Naive thymus-derived CD4-positive, alpha-beta T cell (primary cell): ENCODE measurements at regions of chrX and their contacts with region 1.

Region 1: DNA sequence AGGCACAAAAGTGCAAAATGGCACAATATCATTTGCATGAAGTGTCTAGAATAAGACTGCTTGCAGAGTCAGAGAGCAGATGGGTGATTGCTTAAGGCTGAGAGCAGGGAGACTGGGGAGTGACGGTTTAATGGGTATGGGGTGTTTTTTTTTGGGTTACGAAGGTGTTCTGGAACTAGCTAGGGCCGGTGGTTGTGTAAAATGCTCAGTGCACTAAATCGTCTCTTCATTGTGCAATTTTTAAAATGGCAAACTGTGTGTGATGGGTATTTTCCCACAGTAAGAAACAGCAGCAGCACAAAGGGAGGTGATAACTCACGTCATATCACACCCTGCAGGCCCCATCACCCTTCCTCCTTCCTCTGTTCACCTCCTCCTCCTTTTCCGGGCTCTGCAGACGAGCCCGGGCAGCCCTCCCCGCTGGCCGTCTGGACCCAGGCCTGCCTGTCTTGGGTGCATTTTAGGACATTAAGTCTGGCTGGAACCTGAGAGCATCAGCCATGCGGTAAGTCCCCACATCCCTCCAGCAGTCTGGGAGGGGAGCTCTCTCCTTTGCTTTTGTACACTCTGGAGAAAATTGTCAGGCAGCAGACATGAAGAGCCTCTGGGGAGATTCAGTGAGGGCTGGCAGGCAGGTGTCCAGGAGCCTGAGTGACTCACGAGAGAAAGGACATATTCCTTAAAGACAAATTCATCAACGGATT is 42.7 kb downstream of the ASMT start:
- DNase-seq: peak in 8 of 9 donors; percentile 18 to 73 (median 60)
- ATAC-seq: peak; percentile 69
- H3K4me3 ChIP-seq: peak overlapping the region; percentile 69
- H3K4me3 Mint-ChIP-seq: peak overlapping the region; percentile 77 to 99 (median 92)
- H3K27ac ChIP-seq: peak overlapping the region; percentile 80
- H3K27ac Mint-ChIP-seq: peak overlapping the region; percentile 90 to 99 (median 94)
- H3K4me1 ChIP-seq: peaks cover 21 to 24% of the 10 kb centered on the region in 2 donors
- H3K4me1 Mint-ChIP-seq: peaks cover 17 to 40% (median 36%) of the 10 kb centered on the region in 7 donors
- H3K27me3 ChIP-seq: no peaks in the 10 kb centered on the region
- H3K27me3 Mint-ChIP-seq: no peaks in the 10 kb centered on the region

Region 2: GRCh38 chrX:318739-319578 is 1338.6 kb before region 1 on chrX and contains the start of gene GTPBP6:
- CTCF ChIA-PET with region 1: no interaction called
- POLR2A ChIA-PET with region 1: no interaction called
- intact Hi-C with region 1: loop called in 1 of 2 experiments (anchors 1 kb)
- DNase-seq: peak; percentile 93 to 100 (median 99)
- ATAC-seq: peak; percentile 80
- H3K4me3 ChIP-seq: peak within 1 kb of the TSS; percentile 70
- H3K4me3 Mint-ChIP-seq: peak within 1 kb of the TSS in 9 of 10 donors; percentile 85 to 98 (median 92)
- H3K27ac ChIP-seq: peak within 1 kb of the TSS; percentile 95
- H3K27ac Mint-ChIP-seq: peak within 1 kb of the TSS; percentile 93 to 100 (median 98)
- H3K4me1 ChIP-seq: peaks cover 15 to 16% of the 10 kb centered on the region in 2 donors
- H3K4me1 Mint-ChIP-seq: peaks cover 8 to 34% (median 25%) of the 10 kb centered on the region in 7 donors
- H3K27me3 ChIP-seq: no peaks in the 10 kb centered on the region
- H3K27me3 Mint-ChIP-seq: peaks cover 0 to 3% (median 0%) of the 10 kb centered on the region in 5 donors
- total RNA-seq, gene GTPBP6: 52.1 to 95.2 (median 75.1) TPM

Region 3: GRCh38 chrX:1391707-1392375 is 265.7 kb before region 1 on chrX and contains the start of gene SLC25A6:
- CTCF ChIA-PET with region 1: no interaction called
- POLR2A ChIA-PET with region 1: no interaction called
- intact Hi-C with region 1: loop called (anchors 1 to 5 kb)
- DNase-seq: peak; percentile 97 to 100 (median 100)
- ATAC-seq: peak; percentile 96
- H3K4me3 ChIP-seq: peak within 1 kb of the TSS; percentile 94
- H3K4me3 Mint-ChIP-seq: peak within 1 kb of the TSS; percentile 78 to 95 (median 92)
- H3K27ac ChIP-seq: peak within 1 kb of the TSS; percentile 97
- H3K27ac Mint-ChIP-seq: peak within 1 kb of the TSS; percentile 84 to 98 (median 91)
- H3K4me1 ChIP-seq: peaks cover 25 to 33% of the 10 kb centered on the region in 2 donors
- H3K4me1 Mint-ChIP-seq: peaks cover 35 to 71% (median 52%) of the 10 kb centered on the region in 7 donors
- H3K27me3 ChIP-seq: no peaks in the 10 kb centered on the region
- H3K27me3 Mint-ChIP-seq: no peaks in the 10 kb centered on the region
- total RNA-seq, gene SLC25A6: 238 to 341 (median 270) TPM

Region 4: GRCh38 chrX:1618689-1619088 is 38.8 kb before region 1 on chrX:
- CTCF ChIA-PET with region 1: no interaction called
- POLR2A ChIA-PET with region 1: no interaction called
- intact Hi-C with region 1: loop called in 1 of 2 experiments (anchors 2 kb)
- DNase-seq: no peak
- ATAC-seq: no peak
- H3K4me3 ChIP-seq: no peak overlapping the region
- H3K4me3 Mint-ChIP-seq: no peak overlapping the region
- H3K27ac ChIP-seq: no peak overlapping the region
- H3K27ac Mint-ChIP-seq: peak overlapping the region in 2 of 9 donors; percentile 72 to 78
- H3K4me1 ChIP-seq: peaks cover 0 to 11% of the 10 kb centered on the region in 2 donors
- H3K4me1 Mint-ChIP-seq: peaks cover 4 to 16% (median 9%) of the 10 kb centered on the region in 7 donors
- H3K27me3 ChIP-seq: no peaks in the 10 kb centered on the region
- H3K27me3 Mint-ChIP-seq: no peaks in the 10 kb centered on the region

Region 5: DNA sequence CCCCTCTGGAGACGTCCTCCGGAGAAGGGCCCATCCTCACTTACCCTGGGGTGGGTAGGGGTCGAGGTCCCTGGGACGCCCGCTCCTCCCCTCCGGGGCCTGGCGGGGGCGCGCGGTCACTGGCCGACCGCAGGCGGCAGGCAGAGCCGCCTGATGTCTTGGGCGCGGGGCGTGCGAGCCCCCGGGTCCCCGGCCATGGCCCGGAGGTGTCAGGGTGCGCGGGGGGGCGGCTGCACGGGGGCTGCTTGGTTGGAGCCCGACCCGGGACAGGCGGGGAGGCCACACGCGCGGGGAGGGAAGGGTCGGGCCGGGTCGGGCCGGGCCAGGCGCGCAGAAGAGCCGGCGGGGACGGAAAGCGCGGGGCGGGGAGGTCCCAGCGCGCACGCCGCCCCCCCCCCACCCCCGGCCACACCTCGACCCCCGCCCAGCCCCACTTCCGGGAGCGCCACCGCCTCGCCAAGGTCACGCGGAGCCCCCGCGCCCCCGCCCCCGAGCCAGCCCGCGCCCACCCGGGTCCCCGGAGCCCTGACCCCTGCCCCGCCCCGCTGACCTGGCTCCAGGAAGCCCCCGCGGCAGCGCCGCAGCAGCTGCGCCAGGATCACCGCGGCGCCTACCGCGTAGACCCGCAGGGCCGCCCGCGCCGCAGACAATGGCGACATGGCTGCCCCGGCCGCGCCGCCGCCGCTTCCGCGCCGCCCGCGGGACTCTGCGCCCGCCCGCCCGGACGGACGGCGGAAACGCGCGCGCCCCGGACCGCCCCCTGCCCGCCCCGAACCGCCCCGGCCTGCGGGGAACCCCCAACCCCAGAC is 843.0 kb after region 1 on chrX and contains the starts of genes DHRSX and ZBED1:
- CTCF ChIA-PET with region 1: no interaction called
- POLR2A ChIA-PET with region 1: no interaction called
- intact Hi-C with region 1: loop called (anchors 2 to 5 kb)
- DNase-seq: peak; percentile 16 to 71 (median 40)
- ATAC-seq: peak; percentile 78
- H3K4me3 ChIP-seq: peak within 1 kb of the TSS; percentile 65
- H3K4me3 Mint-ChIP-seq: peak within 1 kb of the TSS; percentile 75 to 90 (median 89)
- H3K27ac ChIP-seq: peak within 1 kb of the TSS; percentile 77
- H3K27ac Mint-ChIP-seq: peak within 1 kb of the TSS; percentile 81 to 94 (median 88)
- H3K4me1 ChIP-seq: peaks cover 0 to 10% of the 10 kb centered on the region in 2 donors
- H3K4me1 Mint-ChIP-seq: peaks cover 15 to 39% (median 29%) of the 10 kb centered on the region in 7 donors
- H3K27me3 ChIP-seq: no peaks in the 10 kb centered on the region
- H3K27me3 Mint-ChIP-seq: no peaks in the 10 kb centered on the region
- total RNA-seq, gene DHRSX: 15.6 to 26.2 (median 20.4) TPM
- total RNA-seq, gene ZBED1: 23.7 to 37.0 (median 27.4) TPM

Region 6: DNA sequence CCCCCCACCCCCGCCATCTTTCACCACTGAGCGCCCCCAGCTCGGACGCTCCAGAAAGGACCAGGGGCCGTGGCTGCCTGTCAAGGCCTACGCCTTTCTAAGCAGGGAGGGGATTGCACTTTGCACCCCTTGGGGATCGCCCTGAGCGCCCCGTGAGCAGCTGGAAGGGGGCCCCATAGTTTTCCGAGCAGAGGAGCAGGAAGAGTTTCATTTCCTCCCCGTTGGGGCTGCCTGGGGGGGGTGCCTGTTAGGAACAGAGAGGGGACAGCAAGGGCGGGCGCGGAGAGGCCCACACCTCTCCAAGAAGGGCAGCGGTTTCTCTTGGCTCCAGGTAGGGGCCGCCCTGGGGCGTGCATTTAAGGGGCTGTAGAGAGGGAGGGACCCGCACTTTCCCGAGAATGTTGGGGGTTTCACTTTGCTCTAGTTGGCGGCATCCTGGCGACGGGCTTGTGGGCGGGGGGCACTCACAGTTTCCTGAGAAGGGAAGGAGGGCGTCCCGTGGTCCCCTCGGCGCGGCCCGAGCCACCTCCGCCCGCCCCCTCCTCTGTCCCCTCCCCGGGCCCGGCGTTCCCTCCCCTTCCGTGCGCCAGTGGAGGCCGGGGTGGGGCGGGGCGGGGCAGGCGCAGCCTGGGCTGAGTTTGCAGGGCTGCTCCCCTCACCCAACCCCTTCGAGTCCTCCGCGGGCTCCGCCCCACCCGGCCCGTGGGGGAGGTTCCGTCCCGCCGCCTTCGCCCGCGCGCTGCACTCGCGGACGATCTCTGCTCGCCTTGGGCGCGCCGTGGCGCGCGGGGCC is 951.3 kb after region 1 on chrX:
- CTCF ChIA-PET with region 1: no interaction called
- POLR2A ChIA-PET with region 1: no interaction called
- intact Hi-C with region 1: loop called (anchors 1 kb)
- DNase-seq: peak; percentile 69 to 89 (median 79)
- ATAC-seq: peak; percentile 99
- H3K4me3 ChIP-seq: peak overlapping the region; percentile 89
- H3K4me3 Mint-ChIP-seq: peak overlapping the region; percentile 90 to 96 (median 93)
- H3K27ac ChIP-seq: peak overlapping the region; percentile 71
- H3K27ac Mint-ChIP-seq: peak overlapping the region; percentile 51 to 93 (median 86)
- H3K4me1 ChIP-seq: peaks cover 9 to 17% of the 10 kb centered on the region in 2 donors
- H3K4me1 Mint-ChIP-seq: peaks cover 39 to 72% (median 56%) of the 10 kb centered on the region in 7 donors
- H3K27me3 ChIP-seq: no peaks in the 10 kb centered on the region
- H3K27me3 Mint-ChIP-seq: no peaks in the 10 kb centered on the region

Region 7: GRCh38 chrX:2690856-2691542 is 1033.5 kb after region 1 on chrX and contains the start of gene CD99:
- CTCF ChIA-PET with region 1: no interaction called
- POLR2A ChIA-PET with region 1: no interaction called
- intact Hi-C with region 1: loop called (anchors 1 kb)
- DNase-seq: peak; percentile 81 to 93 (median 85)
- ATAC-seq: peak; percentile 96
- H3K4me3 ChIP-seq: peak within 1 kb of the TSS; percentile 91
- H3K4me3 Mint-ChIP-seq: peak within 1 kb of the TSS; percentile 87 to 98 (median 95)
- H3K27ac ChIP-seq: peak within 1 kb of the TSS; percentile 83
- H3K27ac Mint-ChIP-seq: peak within 1 kb of the TSS; percentile 80 to 95 (median 91)
- H3K4me1 ChIP-seq: peaks cover 31 to 33% of the 10 kb centered on the region in 2 donors
- H3K4me1 Mint-ChIP-seq: peaks cover 36 to 42% (median 39%) of the 10 kb centered on the region in 7 donors
- H3K27me3 ChIP-seq: no peaks in the 10 kb centered on the region
- H3K27me3 Mint-ChIP-seq: peaks cover 0 to 11% (median 0%) of the 10 kb centered on the region in 5 donors
- total RNA-seq, gene CD99: 112 to 293 (median 181) TPM